HCT116 (cell line): ENCODE measurements at regions of chr12 and their contacts with region 1.

Region 1: DNA sequence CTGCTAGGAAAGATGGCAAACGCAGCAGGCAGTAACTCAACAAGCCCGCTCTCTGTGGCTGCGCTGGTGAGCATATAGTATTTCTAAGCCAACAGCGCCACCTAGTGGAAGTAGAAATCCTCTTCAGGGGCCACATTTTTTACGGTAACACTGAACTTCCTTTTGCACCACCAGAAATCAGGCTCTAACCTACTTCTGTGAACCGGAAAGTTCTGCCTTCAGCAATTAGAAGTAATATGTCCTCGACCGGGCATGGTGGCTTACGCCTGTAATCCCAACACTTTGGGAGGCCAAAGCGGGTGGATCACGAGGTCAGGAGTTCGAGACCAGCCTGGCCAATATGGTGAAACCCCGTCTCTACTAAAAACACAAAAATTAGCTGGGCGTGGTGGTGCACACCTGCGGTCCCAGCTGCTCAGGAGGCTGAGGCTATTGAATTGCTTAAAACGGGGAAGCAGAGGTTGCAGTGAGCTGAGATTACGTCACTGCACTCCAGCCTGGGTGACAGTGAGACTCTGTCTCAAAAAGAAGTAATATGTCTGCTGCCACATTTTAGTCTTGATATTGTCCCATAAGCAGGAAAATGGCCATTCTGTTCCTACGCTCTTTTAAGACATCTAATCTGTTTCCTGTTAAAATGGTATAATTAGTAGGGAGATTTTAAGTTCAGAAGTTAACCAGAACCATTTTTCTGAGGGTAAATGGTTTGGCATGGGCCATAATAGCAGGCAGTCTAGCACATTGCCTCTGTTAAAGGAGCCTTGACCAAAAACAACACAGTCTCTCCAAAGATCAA is 26.8 kb downstream of the APOBEC1 start:
- DNase-seq: peak; percentile 69
- ATAC-seq: peak; percentile 93
- H3K4me3 ChIP-seq: no peak overlapping the region
- H3K27ac ChIP-seq: no peak overlapping the region
- H3K4me1 ChIP-seq: peaks cover 0 to 7% of the 10 kb centered on the region in 2 experiments; a peak in 1 of 4 replicates
- H3K27me3 ChIP-seq: no peaks in the 10 kb centered on the region
- CTCF ChIP-seq: peak; percentile 58 to 93 (median 85)
- POLR2A ChIP-seq: no peak
- RAD21 ChIP-seq: peak; percentile 96

Region 2: DNA sequence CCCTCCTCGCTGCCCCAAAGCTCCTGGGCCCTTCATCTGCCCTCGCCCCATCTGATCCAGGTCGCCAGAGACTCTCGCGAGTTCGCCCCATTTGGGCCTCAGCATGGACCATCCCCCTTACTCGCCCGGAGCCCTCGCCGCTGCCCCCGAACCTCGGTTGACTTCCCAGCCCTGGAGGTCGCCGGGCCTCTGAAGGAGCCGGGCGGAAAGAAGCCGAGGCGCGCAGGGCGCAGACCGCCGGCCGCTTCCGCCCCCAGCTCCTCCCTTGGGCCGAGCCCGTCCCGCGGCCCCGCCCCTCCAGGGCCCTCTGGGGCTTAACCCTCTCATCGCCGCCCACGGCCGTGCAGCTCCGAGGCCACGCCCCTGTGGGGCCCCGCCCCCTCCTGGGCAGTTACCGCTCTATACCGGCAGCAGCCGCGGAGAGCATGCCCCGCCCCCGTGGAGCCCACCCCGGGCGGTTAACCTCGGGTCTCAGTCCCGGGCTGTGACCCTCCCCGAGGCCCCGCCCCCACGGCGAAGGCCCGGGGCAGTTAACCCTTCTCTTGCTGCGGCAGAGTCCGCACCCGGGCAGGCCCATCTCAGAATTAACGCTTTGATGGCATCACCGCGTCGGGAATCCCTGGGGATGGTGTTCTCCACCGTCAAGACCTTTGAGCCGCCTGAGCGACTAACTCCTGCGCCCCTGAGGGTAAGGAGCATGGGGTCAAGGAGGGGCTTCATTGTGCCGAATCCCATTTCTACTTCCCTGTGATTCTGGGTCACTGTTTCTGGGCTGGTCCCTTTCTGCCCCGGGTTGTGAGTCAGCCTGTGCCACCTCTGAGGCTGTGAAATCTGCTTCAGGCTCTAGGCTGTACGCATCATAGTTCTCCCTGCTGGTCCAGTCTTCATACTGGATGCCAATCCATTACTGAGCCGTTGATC is 765.6 kb before region 1 on chr12 and contains the start of gene SPSB2:
- CTCF ChIA-PET with region 1: no interaction called
- POLR2A ChIA-PET with region 1: no interaction called
- RAD21 ChIA-PET with region 1: no interaction called
- intact Hi-C with region 1: loop called (anchors 5 kb)
- DNase-seq: peak; percentile 89
- ATAC-seq: peak; percentile 79
- H3K4me3 ChIP-seq: peak within 1 kb of the TSS; percentile 73 to 92
- H3K27ac ChIP-seq: peak within 1 kb of the TSS; percentile 96
- H3K4me1 ChIP-seq: peaks cover 23 to 50% of the 10 kb centered on the region in 2 experiments
- H3K27me3 ChIP-seq: no peaks in the 10 kb centered on the region
- CTCF ChIP-seq: no peak
- POLR2A ChIP-seq: peak; percentile 35
- RAD21 ChIP-seq: no peak
- total RNA-seq, gene SPSB2: 10.0 TPM

Region 3: DNA sequence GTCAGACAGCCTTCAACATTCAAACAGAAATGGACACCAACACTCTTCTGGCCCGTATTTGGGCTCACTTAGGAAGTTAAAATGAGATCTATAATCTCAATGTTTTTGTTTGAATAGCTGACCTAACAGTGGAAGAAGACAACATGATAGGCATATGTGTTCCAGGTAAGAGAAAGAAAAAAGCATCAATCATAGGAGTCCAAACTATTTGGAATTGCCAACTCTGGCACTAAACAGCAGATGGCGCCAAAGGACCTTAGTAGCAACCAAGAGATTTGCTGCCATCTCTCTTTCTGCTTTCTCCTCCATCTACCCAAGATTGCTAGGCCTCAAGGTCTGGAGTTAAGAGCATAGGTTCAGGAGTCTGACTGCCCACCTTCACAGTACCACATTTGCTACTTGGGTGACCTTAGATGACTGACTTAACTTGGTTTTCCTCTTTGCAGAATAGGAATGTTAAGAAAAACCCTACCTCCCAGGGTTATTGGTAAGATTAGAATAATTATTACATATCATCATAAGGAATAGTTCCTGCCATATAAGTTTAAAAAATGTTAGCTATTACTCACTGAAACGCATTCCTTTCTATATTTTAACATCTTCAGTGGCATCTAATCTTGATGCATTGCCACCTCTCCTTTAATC is 419.2 kb before region 1 on chr12:
- CTCF ChIA-PET with region 1: interaction called, 11 read pairs
- POLR2A ChIA-PET with region 1: no interaction called
- RAD21 ChIA-PET with region 1: no interaction called
- intact Hi-C with region 1: loop called (anchors 1 kb)
- DNase-seq: peak; percentile 75
- ATAC-seq: peak; percentile 82
- H3K4me3 ChIP-seq: no peak overlapping the region
- H3K27ac ChIP-seq: no peak overlapping the region
- H3K4me1 ChIP-seq: no peaks in the 10 kb centered on the region; a peak in 1 of 4 replicates
- H3K27me3 ChIP-seq: no peaks in the 10 kb centered on the region
- CTCF ChIP-seq: peak; percentile 82 to 95 (median 93)
- POLR2A ChIP-seq: no peak
- RAD21 ChIP-seq: peak; percentile 98

Region 4: GRCh38 chr12:7460375-7461259 is 178.3 kb before region 1 on chr12:
- CTCF ChIA-PET with region 1: no interaction called
- POLR2A ChIA-PET with region 1: no interaction called
- RAD21 ChIA-PET with region 1: no interaction called
- intact Hi-C with region 1: loop called (anchors 1 kb)
- DNase-seq: peak; percentile 34
- ATAC-seq: peak; percentile 95
- H3K4me3 ChIP-seq: no peak overlapping the region
- H3K27ac ChIP-seq: no peak overlapping the region
- H3K4me1 ChIP-seq: no peaks in the 10 kb centered on the region
- H3K27me3 ChIP-seq: no peaks in the 10 kb centered on the region
- CTCF ChIP-seq: peak; percentile 79 to 92 (median 89); a peak in 5 of 6 replicates
- POLR2A ChIP-seq: no peak
- RAD21 ChIP-seq: peak; percentile 91

Region 5: GRCh38 chr12:7479771-7480170 is 159.2 kb before region 1 on chr12:
- CTCF ChIA-PET with region 1: no interaction called
- POLR2A ChIA-PET with region 1: no interaction called
- RAD21 ChIA-PET with region 1: no interaction called
- intact Hi-C with region 1: no loop called
- DNase-seq: no peak
- ATAC-seq: no peak
- H3K4me3 ChIP-seq: no peak overlapping the region
- H3K27ac ChIP-seq: no peak overlapping the region
- H3K4me1 ChIP-seq: no peaks in the 10 kb centered on the region
- H3K27me3 ChIP-seq: no peaks in the 10 kb centered on the region
- CTCF ChIP-seq: no peak
- POLR2A ChIP-seq: no peak
- RAD21 ChIP-seq: no peak

Region 6: DNA sequence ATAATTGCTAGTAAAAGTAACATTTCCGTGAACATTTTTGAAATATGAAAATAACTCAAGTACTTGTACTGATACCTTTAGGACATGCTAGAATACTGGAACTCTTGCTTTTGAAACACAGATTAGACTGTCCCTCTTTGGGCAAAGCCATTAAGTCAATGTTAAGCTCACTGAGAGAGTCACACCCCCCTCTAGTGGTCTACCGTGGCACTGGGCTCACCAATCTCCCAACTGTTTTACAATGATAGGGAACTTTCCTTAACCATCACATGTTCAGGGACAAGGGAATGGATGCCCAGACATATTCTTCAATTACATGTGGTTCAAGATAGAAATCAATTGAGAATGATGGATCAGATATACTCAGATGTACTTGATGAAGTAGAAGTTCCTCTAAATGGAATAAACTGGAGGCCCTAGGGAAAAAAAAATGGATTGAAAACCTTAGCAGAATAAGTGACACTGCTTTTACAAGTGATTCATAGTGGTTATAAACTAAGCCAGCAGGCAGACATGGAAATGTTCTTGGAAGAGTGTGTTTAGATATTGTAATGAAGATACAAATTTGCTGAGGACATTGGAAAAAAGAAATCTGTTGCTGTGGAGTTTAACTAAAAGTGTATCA is 168.0 kb after region 1 on chr12:
- CTCF ChIA-PET with region 1: interaction called, 22 read pairs
- POLR2A ChIA-PET with region 1: interaction called, 4 read pairs
- RAD21 ChIA-PET with region 1: interaction called in 1 of 2 experiments, 3 read pairs
- intact Hi-C with region 1: no loop called
- DNase-seq: peak; percentile 61
- ATAC-seq: peak; percentile 95
- H3K4me3 ChIP-seq: no peak overlapping the region
- H3K27ac ChIP-seq: no peak overlapping the region
- H3K4me1 ChIP-seq: peaks cover 9 to 11% of the 10 kb centered on the region in 2 experiments; a peak in 3 of 4 replicates
- H3K27me3 ChIP-seq: no peaks in the 10 kb centered on the region
- CTCF ChIP-seq: peak; percentile 86 to 95 (median 93)
- POLR2A ChIP-seq: no peak
- RAD21 ChIP-seq: peak; percentile 84